Activated T-helper 1 cell treated with anti-CD3 and anti-CD28 coated beads, Interleukin-12 subunit alpha, Interleukin-12 subunit beta, Interleukin-2, Interleukin-4 antibody, amounts not matched to agents 30 ng/mL and 10 ng/mL and 1 ng/mL, durations not matched to agents 14 hours and 24 hours and 36 hours (primary cell): ENCODE measurements at regions of chrX and their contacts with region 1.

Region 1: GRCh38 chrX:51608126-51608525 is 10.6 kb downstream of the CENPVL3 start:
- DNase-seq: no peak
- H3K4me3 Mint-ChIP-seq: no peak overlapping the region
- H3K27ac Mint-ChIP-seq: no peak overlapping the region
- H3K4me1 Mint-ChIP-seq: peaks cover 12% of the 10 kb centered on the region
- H3K27me3 Mint-ChIP-seq: no peaks in the 10 kb centered on the region

Region 2: GRCh38 chrX:51487960-51488267 is 120.2 kb before region 1 on chrX:
- intact Hi-C with region 1: loop called (anchors 5 kb)
- DNase-seq: no peak
- H3K4me3 Mint-ChIP-seq: no peak overlapping the region
- H3K27ac Mint-ChIP-seq: no peak overlapping the region
- H3K4me1 Mint-ChIP-seq: no peaks in the 10 kb centered on the region
- H3K27me3 Mint-ChIP-seq: peaks cover 4% of the 10 kb centered on the region